ENCODE measurements at regions of chr9 and their contacts with region 1.

Region 1: GRCh38 chr9:89891591-89892304 is 286.9 kb downstream of the GADD45G start:
- DNase-seq: peak; percentile 95
- H3K4me3 ChIP-seq: no peak overlapping the region
- H3K27ac ChIP-seq: peak overlapping the region; percentile 81 to 86 (median 82)
- H3K4me1 ChIP-seq: peaks cover 0 to 35% (median 28%) of the 10 kb centered on the region in 4 donors
- H3K27me3 ChIP-seq: no peaks in the 10 kb centered on the region
- CTCF ChIP-seq: no peak
- EP300 ChIP-seq: peak in 3 of 4 donors; percentile 88 to 92 (median 90)
- POLR2A ChIP-seq: no peak

Region 2: DNA sequence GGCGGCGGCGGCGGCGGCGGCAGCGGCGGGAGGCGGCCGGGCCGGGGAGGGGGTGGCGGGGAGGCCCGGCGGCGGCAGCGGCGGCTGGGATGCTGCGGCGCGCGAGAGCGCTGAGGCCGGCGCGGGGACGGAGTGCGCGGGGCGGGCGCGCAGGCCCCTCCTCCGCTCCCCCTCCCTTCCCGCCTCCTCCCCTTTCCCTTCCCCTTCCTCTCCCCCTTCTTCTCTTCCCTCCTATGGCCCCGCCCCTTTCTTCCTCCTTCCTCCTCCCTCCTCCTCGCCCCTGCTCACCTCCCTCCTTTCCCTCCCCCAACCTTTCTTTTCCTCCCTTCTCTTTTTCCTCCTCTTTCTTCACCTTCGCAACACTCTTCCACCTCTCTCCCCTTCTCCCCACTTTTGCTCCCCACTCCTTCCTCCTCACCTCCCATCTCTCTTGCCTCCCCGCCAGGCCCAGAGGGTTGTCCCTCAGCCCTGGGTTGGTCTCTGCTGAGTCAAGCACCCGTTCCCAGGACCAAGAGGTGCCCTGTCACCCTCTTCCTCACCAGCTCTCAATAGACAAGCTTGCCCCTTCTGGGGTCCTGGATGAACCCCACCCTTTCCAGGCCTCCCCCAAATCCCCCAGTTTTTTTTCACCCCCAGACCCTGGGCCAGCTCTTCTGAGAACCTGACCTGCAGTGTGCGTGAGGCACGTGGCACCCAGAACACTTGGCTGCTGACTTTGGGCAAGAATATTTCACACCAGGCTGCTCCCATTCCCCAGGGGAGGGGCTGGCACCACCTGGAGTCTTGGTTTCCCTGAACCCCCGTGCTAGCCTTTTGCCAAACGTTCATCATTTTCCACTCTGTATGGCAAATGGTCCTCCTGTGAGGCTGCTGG is 393.5 kb before region 1 on chr9 and contains the start of gene SEMA4D:
- intact Hi-C with region 1: no loop called
- DNase-seq: peak; percentile 89
- H3K4me3 ChIP-seq: peak within 1 kb of the TSS; percentile 53 to 90 (median 70)
- H3K27ac ChIP-seq: peak within 1 kb of the TSS in 3 of 4 donors; percentile 47 to 60 (median 58)
- H3K4me1 ChIP-seq: peaks cover 0 to 20% (median 9%) of the 10 kb centered on the region in 4 donors
- H3K27me3 ChIP-seq: no peaks in the 10 kb centered on the region
- CTCF ChIP-seq: no peak
- EP300 ChIP-seq: no peak
- POLR2A ChIP-seq: no peak
- total RNA-seq, gene SEMA4D: 4.6 to 13.0 (median 7.0) TPM

Region 3: DNA sequence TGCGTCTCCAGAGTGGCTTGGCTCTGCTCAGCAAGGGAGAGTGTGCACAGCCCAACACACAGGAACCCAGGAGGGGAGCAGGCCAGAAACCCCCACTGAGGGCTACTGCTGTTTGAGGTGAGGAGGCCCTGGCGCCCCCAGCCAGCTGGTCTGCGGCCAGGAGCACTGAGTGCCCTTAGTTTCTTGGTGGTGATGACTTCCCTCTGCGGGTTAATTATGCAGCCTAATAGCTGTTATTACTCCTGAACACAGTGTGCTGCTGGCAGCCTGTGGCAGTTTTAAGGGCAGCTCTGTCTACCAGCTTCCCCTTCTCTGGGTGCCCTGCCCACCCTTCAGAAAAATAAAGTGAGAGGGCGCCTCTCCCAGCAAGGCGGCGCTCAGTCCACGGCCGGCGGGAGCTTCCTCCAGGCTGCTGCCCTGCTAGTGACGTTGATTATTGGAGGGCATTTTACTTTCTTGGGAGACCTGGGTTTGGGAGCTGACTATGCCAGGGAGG is 267.8 kb before region 1 on chr9:
- intact Hi-C with region 1: loop called (anchors 5 kb)
- DNase-seq: peak; percentile 88
- H3K4me3 ChIP-seq: no peak overlapping the region
- H3K27ac ChIP-seq: peak overlapping the region; percentile 82 to 88 (median 85)
- H3K4me1 ChIP-seq: peaks cover 0 to 72% (median 48%) of the 10 kb centered on the region in 4 donors
- H3K27me3 ChIP-seq: no peaks in the 10 kb centered on the region
- CTCF ChIP-seq: peak in 1 of 4 experiments; percentile 20
- EP300 ChIP-seq: no peak
- POLR2A ChIP-seq: no peak

Region 4: DNA sequence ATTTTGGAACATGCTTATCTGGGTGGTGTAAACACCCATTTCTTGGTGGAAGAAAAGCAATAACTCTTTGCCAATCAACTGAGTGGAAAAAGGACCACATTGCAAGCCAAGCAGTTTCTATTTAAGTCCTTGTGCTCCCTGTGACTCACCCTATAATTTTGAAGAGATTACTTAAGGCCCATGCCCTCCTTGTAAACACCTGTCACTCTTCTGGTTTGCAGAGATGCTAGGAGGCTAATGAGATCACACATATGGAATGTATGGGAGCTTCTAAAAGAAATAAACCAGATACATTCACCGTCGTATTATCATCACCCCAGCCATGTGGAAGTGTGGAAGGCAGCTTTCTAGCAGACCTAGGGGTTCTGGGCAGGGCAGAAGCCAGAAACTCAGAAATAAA is 50.1 kb after region 1 on chr9:
- intact Hi-C with region 1: loop called (anchors 1 kb)
- DNase-seq: no peak
- H3K4me3 ChIP-seq: no peak overlapping the region
- H3K27ac ChIP-seq: peak overlapping the region; percentile 71 to 79 (median 76)
- H3K4me1 ChIP-seq: peaks cover 0 to 57% (median 52%) of the 10 kb centered on the region in 4 donors
- H3K27me3 ChIP-seq: no peaks in the 10 kb centered on the region
- CTCF ChIP-seq: no peak
- EP300 ChIP-seq: peak; percentile 60 to 96 (median 94)
- POLR2A ChIP-seq: no peak

Region 5: DNA sequence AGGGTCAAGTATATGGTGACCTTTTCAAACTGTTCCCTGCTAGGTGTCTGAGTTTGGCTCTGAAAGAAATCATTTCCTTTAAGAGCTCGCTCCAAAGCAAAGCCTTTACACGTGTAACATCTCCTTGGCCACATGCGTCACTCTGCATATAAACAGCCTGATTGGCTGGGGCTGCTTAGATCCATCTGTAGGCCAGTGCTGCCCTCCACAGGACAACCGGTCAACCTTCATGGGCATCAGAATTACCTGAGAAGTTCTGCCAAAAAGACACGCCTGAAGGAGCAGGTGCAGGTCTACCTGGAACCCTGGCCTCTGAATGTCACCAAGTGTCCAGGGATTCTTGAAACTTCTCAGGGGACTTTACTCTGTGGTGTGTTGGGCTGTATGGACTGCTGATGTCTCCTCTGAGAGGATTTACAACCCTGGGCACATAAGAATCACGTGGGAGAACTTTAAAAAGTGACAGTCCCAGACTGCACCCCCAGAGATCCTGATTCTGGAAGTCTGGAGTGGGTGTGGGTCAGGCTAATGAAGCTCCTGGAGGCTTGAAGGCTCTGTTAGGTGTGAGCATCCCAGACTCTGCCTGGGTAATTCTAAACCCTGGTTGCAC is 210.6 kb after region 1 on chr9:
- intact Hi-C with region 1: loop called (anchors 10 kb)
- DNase-seq: peak; percentile 94
- H3K4me3 ChIP-seq: no peak overlapping the region
- H3K27ac ChIP-seq: no peak overlapping the region
- H3K4me1 ChIP-seq: peaks cover 0 to 22% (median 10%) of the 10 kb centered on the region in 4 donors
- H3K27me3 ChIP-seq: no peaks in the 10 kb centered on the region
- CTCF ChIP-seq: peak; percentile 72 to 93 (median 88)
- EP300 ChIP-seq: no peak
- POLR2A ChIP-seq: no peak

Region 6: DNA sequence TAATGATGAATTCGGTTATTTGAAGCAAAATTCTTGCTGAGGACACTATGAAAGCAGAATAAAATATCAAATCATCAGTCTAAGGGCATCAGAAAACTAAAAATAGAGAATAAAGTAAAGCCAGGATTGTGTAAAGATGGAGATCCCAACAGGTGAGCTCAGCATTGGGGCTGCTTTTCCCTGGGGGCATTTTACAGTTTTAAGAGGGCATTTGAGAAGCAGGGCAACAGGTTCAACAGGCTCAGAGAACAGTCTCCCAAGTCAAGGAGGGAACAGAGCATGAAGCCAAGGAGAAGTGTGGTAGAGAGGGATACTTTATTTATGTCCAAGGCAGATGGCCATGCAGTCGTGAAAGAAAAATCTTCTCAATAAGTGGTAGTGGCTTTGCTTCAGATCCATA is 1055.2 kb after region 1 on chr9:
- intact Hi-C with region 1: no loop called
- DNase-seq: no peak
- H3K4me3 ChIP-seq: no peak overlapping the region
- H3K27ac ChIP-seq: no peak overlapping the region
- H3K4me1 ChIP-seq: no peaks in the 10 kb centered on the region
- H3K27me3 ChIP-seq: no peaks in the 10 kb centered on the region
- CTCF ChIP-seq: no peak
- EP300 ChIP-seq: no peak
- POLR2A ChIP-seq: no peak